Activated B cell treated with CpG ODN at 0.5 μM for 24 hours (primary cell): ENCODE measurements at regions of chr1 and their contacts with region 1.

Region 1: DNA sequence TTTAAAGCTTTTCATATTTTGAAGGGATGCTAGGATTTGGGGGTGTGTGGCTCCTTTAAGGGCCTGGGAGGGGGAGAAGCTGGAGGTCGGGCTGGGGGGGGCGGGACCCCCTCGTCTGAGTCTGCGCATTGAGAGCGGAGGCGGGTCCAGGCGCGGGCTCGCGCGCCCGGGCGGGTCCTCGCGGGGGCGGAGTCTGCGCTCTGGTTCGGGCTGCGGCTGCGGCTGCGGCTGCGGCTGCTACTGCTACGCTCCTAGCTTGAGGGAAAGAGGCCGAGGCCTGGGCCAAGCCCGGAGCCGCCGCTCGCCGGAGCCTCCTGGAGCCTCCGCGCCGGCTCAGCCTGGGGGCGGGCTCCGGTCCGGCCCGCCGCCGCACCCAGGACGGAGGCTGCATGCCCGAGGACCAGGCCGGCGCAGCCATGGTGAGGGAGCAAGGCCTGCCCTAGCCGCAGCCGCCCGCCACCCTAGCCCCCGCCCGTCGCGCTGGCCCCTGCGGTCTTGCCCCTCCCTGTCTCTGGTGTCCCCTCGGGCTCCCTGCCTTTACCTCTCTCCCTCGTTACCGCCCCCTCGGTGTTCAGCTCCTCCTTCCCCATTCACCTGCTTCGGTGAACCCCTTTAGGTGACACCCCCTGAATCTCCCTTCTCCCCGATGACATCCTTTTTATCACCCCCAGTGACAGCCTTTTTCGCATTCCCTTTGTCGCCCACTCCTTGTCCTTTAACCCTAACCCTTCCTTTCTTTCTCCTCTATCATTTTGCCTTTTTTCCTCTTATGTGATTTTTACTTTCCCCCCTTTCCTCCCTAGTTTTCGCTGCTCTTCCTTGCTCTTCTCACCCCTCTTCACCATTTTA is at the start of gene ZYG11B:
- DNase-seq: peak; percentile 90
- ATAC-seq: peak; percentile 94
- H3K4me3 Mint-ChIP-seq: peak within 1 kb of the TSS; percentile 91
- H3K27ac Mint-ChIP-seq: peak within 1 kb of the TSS; percentile 85
- H3K4me1 Mint-ChIP-seq: peaks cover 35% of the 10 kb centered on the region
- H3K27me3 Mint-ChIP-seq: no peaks in the 10 kb centered on the region
- CTCF ChIP-seq: no peak
- total RNA-seq, gene ZYG11B: 14.9 and 17.3 TPM in 2 replicates

Region 2: GRCh38 chr1:52680353-52680752 is 46.1 kb before region 1 on chr1:
- CTCF ChIA-PET with region 1: no interaction called
- POLR2A ChIA-PET with region 1: no interaction called
- intact Hi-C with region 1: no loop called
- DNase-seq: no peak
- ATAC-seq: no peak
- H3K4me3 Mint-ChIP-seq: no peak overlapping the region
- H3K27ac Mint-ChIP-seq: peak overlapping the region; percentile 5
- H3K4me1 Mint-ChIP-seq: peaks cover 31% of the 10 kb centered on the region
- H3K27me3 Mint-ChIP-seq: no peaks in the 10 kb centered on the region
- CTCF ChIP-seq: no peak

Region 3: GRCh38 chr1:52697795-52698674 is 28.5 kb before region 1 on chr1 and contains the start of gene COA7:
- CTCF ChIA-PET with region 1: interaction called, 6 read pairs
- POLR2A ChIA-PET with region 1: interaction called, 39 read pairs
- intact Hi-C with region 1: loop called (anchors 1 kb)
- DNase-seq: peak; percentile 72
- ATAC-seq: peak; percentile 30
- H3K4me3 Mint-ChIP-seq: peak within 1 kb of the TSS; percentile 91
- H3K27ac Mint-ChIP-seq: peak within 1 kb of the TSS; percentile 84
- H3K4me1 Mint-ChIP-seq: peaks cover 27% of the 10 kb centered on the region
- H3K27me3 Mint-ChIP-seq: no peaks in the 10 kb centered on the region
- CTCF ChIP-seq: no peak
- total RNA-seq, gene COA7: 23.5 and 23.6 TPM in 2 replicates

Region 4: GRCh38 chr1:53889304-53890298 is 1163.1 kb after region 1 on chr1 and contains the start of gene YIPF1:
- CTCF ChIA-PET with region 1: no interaction called
- POLR2A ChIA-PET with region 1: no interaction called
- intact Hi-C with region 1: loop called (anchors 5 kb)
- DNase-seq: peak; percentile 81
- ATAC-seq: peak; percentile 98
- H3K4me3 Mint-ChIP-seq: peak within 1 kb of the TSS; percentile 98
- H3K27ac Mint-ChIP-seq: peak within 1 kb of the TSS; percentile 94
- H3K4me1 Mint-ChIP-seq: peaks cover 40% of the 10 kb centered on the region
- H3K27me3 Mint-ChIP-seq: no peaks in the 10 kb centered on the region
- CTCF ChIP-seq: no peak
- total RNA-seq, gene YIPF1: 16.6 and 18.5 TPM in 2 replicates